A673 (cell line): ENCODE measurements at regions of chr5 and their contacts with region 1.

Region 1: DNA sequence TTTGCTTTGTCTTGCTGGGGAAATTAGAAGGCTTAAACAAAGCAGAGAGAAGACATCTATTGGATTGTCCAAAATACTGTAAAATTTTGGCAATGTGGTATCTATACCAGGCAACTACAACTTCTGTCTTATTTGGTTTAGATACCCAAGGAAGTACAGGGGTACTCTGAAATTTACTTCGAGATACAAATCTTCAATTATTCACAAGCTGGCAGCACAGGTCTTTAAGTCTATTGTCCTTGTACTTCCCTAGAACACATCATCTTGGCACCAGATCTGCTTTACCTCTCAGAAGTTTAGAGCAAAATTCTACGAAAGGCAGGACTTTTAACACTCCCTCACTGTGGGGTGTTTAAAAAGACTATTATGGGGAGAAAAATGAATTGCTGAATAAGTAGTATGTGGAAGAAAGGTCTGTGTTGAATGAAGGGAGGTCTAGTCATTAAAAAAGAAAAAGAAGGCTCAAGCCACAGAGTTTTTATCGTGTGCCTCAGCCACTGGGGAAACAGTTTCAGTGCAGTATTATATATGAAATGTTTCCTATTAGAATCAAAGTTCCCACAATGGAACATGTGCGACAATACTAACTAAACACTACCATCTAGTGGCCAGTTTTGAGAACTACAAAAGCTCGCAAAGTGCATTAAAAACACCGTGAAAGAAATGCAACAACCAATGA is 93.7 kb downstream of the PDE4D start:
- DNase-seq: peak; percentile 73
- H3K4me3 ChIP-seq: no peak overlapping the region
- H3K27ac ChIP-seq: no peak overlapping the region
- H3K4me1 ChIP-seq: no peaks in the 10 kb centered on the region
- H3K27me3 ChIP-seq: peaks cover 16% of the 10 kb centered on the region
- CTCF ChIP-seq: peak; percentile 76

Region 2: DNA sequence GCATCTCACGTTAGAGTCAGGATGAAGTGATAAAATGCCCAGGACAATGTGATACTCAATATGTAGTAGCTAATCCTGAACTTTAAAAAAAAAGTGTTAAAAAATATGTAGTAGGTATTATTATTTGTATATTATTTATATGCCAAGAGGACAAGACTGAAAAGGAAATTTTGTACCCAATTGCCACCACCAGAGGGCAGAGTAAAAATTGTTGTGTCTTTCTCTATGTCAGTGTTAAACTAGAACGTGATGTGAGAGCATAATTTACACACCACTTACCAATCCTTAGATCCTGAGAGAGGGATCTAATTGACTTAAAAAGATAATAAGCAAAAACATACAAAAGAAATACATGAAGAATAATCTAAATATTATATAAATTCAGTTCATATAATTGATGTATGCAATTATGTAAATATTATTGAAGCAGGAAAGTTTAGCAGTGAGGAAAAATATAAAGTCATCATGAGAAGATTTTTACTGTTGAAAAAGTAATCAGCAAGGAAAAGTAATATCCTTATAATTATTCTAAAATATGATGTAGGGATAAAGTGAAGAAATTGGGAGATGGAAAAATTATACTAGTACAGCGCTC is 928.1 kb before region 1 on chr5:
- CTCF ChIA-PET with region 1: no interaction called
- POLR2A ChIA-PET with region 1: no interaction called
- intact Hi-C with region 1: loop called (anchors 5 kb)
- DNase-seq: peak; percentile 60
- H3K4me3 ChIP-seq: no peak overlapping the region
- H3K27ac ChIP-seq: no peak overlapping the region
- H3K4me1 ChIP-seq: no peaks in the 10 kb centered on the region
- H3K27me3 ChIP-seq: peaks cover 9% of the 10 kb centered on the region
- CTCF ChIP-seq: peak; percentile 70

Region 3: GRCh38 chr5:59390074-59390659 is 409.6 kb before region 1 on chr5:
- CTCF ChIA-PET with region 1: no interaction called
- POLR2A ChIA-PET with region 1: no interaction called
- intact Hi-C with region 1: loop called (anchors 5 kb)
- DNase-seq: peak; percentile 35
- H3K4me3 ChIP-seq: no peak overlapping the region
- H3K27ac ChIP-seq: no peak overlapping the region
- H3K4me1 ChIP-seq: no peaks in the 10 kb centered on the region
- H3K27me3 ChIP-seq: peaks cover 5% of the 10 kb centered on the region
- CTCF ChIP-seq: peak; percentile 71

Region 4: DNA sequence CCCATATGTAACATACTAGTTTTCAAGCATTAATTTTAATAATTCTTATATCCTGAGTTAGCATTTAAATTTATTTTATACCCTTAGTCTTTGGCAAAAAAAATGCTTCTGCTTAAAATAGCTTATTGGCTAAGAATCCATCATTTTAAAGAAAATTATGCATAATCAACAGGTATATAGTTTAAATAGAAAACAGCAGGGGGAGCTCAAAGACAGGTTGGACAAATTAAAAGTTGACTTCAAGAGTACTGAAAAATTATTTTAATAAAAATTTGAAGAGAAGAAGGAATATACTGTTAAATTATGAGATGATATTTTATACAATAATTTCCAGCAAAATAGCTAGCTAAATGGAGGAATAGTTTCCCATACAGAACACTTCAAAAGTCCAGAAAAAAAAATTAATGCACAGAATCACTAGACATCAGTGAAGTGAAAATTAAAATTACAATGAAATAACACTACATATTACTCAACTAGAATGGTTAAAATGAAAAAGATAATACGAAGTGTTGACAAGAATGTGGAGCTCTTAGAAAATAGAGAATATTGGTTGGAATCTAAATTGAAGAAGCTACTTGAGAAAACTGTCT is 293.4 kb before region 1 on chr5:
- CTCF ChIA-PET with region 1: interaction called, 3 read pairs
- POLR2A ChIA-PET with region 1: no interaction called
- intact Hi-C with region 1: loop called (anchors 5 kb)
- DNase-seq: no peak
- H3K4me3 ChIP-seq: no peak overlapping the region
- H3K27ac ChIP-seq: no peak overlapping the region
- H3K4me1 ChIP-seq: no peaks in the 10 kb centered on the region
- H3K27me3 ChIP-seq: peaks cover 6% of the 10 kb centered on the region
- CTCF ChIP-seq: peak; percentile 55

Region 5: DNA sequence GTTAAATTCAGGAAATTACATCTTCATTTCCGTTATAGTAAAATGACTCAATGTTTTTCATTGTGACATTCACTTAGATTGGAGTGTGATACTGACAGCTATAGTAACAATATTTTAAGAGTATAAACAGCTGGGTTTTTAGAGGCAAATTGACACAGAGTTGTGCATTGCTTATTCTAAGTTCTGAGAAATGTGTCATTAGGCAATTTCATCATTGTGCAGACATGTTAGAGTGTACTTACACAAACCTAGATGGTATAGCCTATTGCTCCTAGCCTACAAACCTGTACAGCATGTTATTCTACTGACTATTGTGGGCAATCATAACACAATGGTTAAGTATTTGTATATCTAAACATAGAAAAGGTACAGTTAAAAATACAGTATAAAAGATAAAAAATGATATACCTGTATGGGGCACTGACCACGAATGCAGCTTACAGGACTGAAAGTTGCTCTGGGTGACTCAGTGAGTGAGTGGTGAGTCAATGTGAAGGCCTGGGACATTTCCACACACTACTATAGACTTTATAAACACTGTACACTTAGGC is 38.9 kb before region 1 on chr5:
- CTCF ChIA-PET with region 1: no interaction called
- POLR2A ChIA-PET with region 1: no interaction called
- intact Hi-C with region 1: no loop called
- DNase-seq: peak; percentile 54
- H3K4me3 ChIP-seq: no peak overlapping the region
- H3K27ac ChIP-seq: no peak overlapping the region
- H3K4me1 ChIP-seq: no peaks in the 10 kb centered on the region
- H3K27me3 ChIP-seq: peaks cover 8% of the 10 kb centered on the region
- CTCF ChIP-seq: no peak